HepG2 (cell line): ENCODE measurements at regions of chr3 and their contacts with region 1.

Region 1: DNA sequence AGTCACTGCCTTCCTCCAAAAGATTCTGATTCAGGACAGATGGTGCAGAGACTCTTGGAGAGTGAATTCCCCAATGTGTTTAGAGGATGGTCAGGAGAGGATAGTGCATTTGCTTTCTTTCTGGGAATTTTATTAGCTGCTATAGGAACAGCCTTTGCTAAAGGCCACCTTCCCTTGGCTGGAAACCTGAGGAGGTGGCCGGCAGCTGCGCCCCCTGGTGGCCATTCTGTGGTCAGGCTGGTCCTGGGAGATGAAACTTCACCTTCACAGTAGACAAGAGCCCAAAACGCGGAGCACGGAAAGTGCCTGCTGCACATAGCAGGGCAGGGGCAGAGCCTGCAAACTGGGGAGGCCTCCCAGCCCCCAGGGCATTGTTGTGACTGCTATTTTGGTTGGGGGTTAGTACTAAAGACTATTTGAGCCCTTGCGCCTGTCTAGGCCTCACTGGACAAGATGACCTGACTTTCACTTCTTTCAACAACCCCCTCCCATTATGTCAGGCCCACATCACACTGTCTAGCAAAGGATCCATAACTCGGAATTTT is 34.3 kb downstream of the SEC22C start:
- DNase-seq: peak; percentile 23
- ATAC-seq: peak; percentile 67
- H3K4me3 ChIP-seq: no peak overlapping the region
- H3K27ac ChIP-seq: no peak overlapping the region
- H3K4me1 ChIP-seq: peaks cover 22% of the 10 kb centered on the region
- H3K27me3 ChIP-seq: no peaks in the 10 kb centered on the region
- CTCF ChIP-seq: peak; percentile 90
- EP300 ChIP-seq: no peak
- POLR2A ChIP-seq: no peak
- RAD21 ChIP-seq: peak; percentile 62

Region 2: DNA sequence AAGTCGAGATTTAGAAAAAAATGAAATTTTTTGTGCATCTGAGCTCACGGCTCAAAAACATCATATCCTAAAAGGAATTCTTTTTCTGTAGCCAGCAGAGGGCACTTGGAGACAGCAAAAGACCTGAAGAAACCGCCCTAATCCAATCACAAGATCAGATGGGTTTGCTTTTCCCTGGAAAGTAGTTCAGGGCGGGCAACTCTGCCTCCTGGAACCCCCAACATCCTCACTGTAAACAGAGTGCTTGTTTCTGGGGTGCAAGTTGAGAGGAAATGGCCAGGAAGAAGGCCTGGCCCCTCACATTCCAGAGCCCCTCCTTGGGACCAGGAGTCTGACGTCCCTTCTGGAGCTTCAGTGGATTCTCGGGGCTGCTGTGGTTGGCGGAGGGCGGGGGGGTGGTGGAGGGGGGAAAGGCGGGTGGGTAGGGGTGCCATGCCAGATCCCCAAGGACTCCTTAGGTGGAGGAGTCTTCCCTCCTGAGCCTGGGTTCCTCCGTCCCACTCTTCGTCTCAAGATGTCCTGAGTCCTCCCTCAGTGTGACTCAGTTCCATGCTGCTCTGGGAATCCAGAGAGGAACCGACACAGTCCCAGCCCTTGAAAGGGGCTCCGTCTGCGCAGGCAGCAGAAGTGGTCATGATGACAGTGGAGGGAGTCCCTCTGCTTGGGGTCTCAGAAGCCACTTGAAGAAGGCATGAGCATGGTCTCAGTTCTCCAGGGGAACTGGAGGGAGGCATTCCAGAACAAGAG is 317.4 kb before region 1 on chr3:
- CTCF ChIA-PET with region 1: interaction called, 10 read pairs
- POLR2A ChIA-PET with region 1: no interaction called
- in situ Hi-C with region 1: no loop called
- intact Hi-C with region 1: loop called (anchors 2 kb)
- DNase-seq: peak; percentile 50
- ATAC-seq: peak; percentile 51
- H3K4me3 ChIP-seq: no peak overlapping the region
- H3K27ac ChIP-seq: no peak overlapping the region
- H3K4me1 ChIP-seq: peaks cover 12% of the 10 kb centered on the region
- H3K27me3 ChIP-seq: peaks cover 0 to 12% of the 10 kb centered on the region in 2 experiments; a peak in 1 of 5 replicates
- CTCF ChIP-seq: peak; percentile 69
- EP300 ChIP-seq: no peak
- POLR2A ChIP-seq: no peak
- RAD21 ChIP-seq: peak; percentile 74